ENCODE measurements at regions of chr17 and their contacts with region 1.

Region 1: DNA sequence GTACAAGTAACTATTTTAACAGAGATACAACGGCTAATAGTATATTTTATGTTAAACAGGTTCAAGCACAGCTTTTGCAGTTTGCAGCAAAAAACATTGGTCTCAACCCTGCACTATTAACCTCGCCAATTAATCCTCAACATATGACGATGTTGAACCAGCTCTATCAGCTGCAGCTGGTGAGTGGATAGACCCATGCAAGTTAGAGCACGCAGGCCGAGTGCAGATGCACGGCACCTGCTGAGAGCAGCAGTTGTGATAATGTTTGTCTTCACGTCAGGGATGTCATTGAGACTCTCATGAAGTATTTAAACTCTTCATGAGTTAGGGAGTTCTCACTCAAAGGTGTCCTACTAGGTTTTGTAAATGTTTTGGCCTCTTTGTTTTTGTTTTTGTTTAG is 45.6 kb downstream of the TMC6 start:
- DNase-seq: no peak
- ATAC-seq: no peak

Region 2: DNA sequence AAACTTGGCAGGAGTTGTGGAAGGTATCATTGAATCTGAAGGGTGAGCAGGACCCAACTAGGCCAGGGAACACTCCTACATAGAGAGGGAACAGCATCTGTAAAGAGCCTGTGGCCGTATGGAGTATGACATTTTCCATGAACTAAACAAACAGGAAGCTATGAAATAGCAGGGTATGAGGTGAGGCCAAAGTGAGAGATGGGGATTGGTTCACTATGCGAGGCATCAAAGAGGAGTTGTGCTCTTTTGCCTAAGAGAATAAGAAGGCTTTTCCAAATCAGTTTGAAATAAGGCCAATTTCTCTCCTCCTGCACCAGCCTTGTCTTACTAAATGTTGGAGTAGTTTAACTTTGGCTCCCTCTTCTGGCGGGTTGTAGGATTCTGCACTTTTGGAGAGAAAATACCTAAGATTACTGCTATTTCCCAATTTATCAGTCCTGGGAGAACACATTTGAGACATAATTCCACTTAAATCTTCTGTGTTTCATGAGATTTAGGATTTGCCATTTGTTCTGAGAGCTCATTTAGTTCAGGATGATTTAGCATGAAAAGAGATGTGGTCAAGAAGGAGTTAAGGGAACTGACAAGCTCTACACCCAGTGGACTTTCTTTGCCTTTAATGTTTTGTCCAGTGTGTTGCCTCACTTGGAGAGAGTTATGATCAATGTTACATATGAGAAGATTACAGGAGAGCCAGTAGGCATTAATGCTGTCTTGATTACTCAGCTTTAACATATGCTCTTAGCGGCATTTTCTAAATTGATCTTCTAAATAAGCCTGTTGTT is 69.1 kb before region 1 on chr17:
- intact Hi-C with region 1: loop called (anchors 2 to 10 kb)
- DNase-seq: peak; percentile 31
- ATAC-seq: peak; percentile 72 to 73

Region 3: GRCh38 chr17:78019367-78019975 is 63.5 kb before region 1 on chr17:
- intact Hi-C with region 1: loop called (anchors 2 to 10 kb)
- DNase-seq: no peak
- ATAC-seq: peak in 1 of 2 donors; percentile 62

Region 4: DNA sequence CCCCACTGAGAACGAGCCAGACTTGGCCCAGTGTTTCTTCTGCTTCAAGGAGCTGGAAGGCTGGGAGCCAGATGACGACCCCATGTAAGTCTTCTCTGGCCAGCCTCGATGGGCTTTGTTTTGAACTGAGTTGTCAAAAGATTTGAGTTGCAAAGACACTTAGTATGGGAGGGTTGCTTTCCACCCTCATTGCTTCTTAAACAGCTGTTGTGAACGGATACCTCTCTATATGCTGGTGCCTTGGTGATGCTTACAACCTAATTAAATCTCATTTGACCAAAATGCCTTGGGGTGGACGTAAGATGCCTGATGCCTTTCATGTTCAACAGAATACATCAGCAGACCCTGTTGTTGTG is 131.7 kb after region 1 on chr17:
- intact Hi-C with region 1: no loop called
- DNase-seq: no peak
- ATAC-seq: no peak